Breast epithelium (tissue), 4 donors: ENCODE measurements at regions of chr1 and their contacts with region 1.

Region 1: GRCh38 chr1:244180256-244180655 is 129.2 kb downstream of the ZBTB18 start:
- DNase-seq: no peak
- H3K4me3 ChIP-seq: no peak overlapping the region
- H3K27ac ChIP-seq: no peak overlapping the region
- H3K4me1 ChIP-seq: no peaks in the 10 kb centered on the region
- H3K27me3 ChIP-seq: no peaks in the 10 kb centered on the region
- CTCF ChIP-seq: no peak
- POLR2A ChIP-seq: no peak

Region 2: GRCh38 chr1:244154872-244155531 is 25.3 kb before region 1 on chr1:
- intact Hi-C with region 1: loop called (anchors 1 kb)
- DNase-seq: no peak
- H3K4me3 ChIP-seq: no peak overlapping the region
- H3K27ac ChIP-seq: no peak overlapping the region
- H3K4me1 ChIP-seq: no peaks in the 10 kb centered on the region
- H3K27me3 ChIP-seq: no peaks in the 10 kb centered on the region
- CTCF ChIP-seq: no peak
- POLR2A ChIP-seq: no peak

Region 3: DNA sequence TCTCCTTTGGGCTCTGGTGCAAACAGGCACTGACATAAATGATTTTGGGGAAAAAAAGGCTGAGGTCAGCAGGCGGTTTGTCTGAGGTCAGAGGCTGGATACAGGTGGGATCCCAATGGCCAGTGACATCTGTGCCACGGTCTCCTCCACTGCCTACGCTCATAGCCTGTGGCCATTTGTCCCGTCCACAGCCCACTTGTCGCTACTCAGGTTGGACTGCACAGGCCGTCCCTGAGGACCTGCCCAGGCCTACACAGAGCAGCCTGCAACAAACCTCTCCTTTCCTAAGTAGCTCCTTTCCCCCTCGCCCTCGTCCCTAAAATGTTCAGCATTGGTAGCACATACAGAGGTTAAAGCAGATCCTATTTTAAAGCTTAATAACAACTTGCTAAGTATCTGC is 21.5 kb after region 1 on chr1:
- intact Hi-C with region 1: loop called (anchors 1 kb)
- DNase-seq: no peak
- H3K4me3 ChIP-seq: no peak overlapping the region
- H3K27ac ChIP-seq: no peak overlapping the region
- H3K4me1 ChIP-seq: no peaks in the 10 kb centered on the region
- H3K27me3 ChIP-seq: no peaks in the 10 kb centered on the region
- CTCF ChIP-seq: no peak
- POLR2A ChIP-seq: no peak